H1 (cell line): ENCODE measurements at regions of chr1 and their contacts with region 1.

Region 1: GRCh38 chr1:13813398-13814012 is 113.5 kb downstream of the PRDM2 start:
- DNase-seq: peak in 1 of 2 experiments; percentile 91
- H3K4me3 ChIP-seq: no peak overlapping the region
- H3K27ac ChIP-seq: no peak overlapping the region
- H3K4me1 ChIP-seq: no peaks in the 10 kb centered on the region
- H3K27me3 ChIP-seq: no peaks in the 10 kb centered on the region; a peak in 1 of 7 replicates
- CTCF ChIP-seq: peak; percentile 87 to 93 (median 88)
- EP300 ChIP-seq: no peak
- POLR2A ChIP-seq: no peak
- RAD21 ChIP-seq: peak; percentile 66 to 73

Region 2: DNA sequence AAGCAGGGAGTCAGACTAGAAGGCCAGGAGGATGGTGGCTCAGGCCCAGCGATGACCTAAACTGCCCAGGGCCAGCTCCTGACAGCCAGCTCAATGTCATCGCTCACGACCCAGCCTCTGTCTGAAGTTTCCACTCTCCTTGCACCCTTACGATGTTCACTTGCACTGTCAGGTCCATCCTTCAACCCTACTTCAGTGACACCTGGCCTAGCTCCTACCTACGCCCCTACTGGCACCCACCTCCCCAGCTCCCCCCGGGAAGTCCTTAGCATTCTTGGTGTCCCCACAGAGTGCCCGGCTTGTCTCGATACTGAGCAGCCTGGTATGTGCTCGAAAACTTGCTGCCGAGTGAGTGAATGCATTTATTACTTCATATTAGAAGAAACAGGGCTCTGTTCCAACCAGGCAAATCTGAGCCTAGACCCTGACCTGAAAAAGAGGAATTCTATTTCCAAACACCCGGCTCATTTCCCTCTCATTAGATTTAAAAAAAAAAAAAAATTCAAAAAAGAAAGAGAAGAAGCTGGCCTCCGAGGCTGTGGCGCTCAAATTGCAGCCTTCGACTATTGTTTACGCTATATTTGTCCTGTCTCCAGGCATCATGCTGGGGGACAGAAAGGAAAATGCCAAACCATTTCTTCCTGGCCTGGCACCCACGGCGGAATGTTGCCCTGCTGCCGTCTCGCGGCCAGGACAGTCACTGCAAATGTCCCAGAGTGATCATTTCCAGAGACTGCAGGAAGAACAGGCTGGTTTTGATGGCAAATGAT is 269.9 kb before region 1 on chr1:
- CTCF ChIA-PET with region 1: no interaction called
- POLR2A ChIA-PET with region 1: no interaction called
- DNase-seq: no peak
- H3K4me3 ChIP-seq: no peak overlapping the region
- H3K27ac ChIP-seq: no peak overlapping the region
- H3K4me1 ChIP-seq: no peaks in the 10 kb centered on the region
- H3K27me3 ChIP-seq: no peaks in the 10 kb centered on the region
- CTCF ChIP-seq: peak; percentile 9 to 25 (median 13); a peak in 3 of 4 replicates
- EP300 ChIP-seq: no peak
- POLR2A ChIP-seq: no peak
- RAD21 ChIP-seq: peak in 1 of 2 experiments; percentile 35; a peak in 2 of 4 replicates

Region 3: DNA sequence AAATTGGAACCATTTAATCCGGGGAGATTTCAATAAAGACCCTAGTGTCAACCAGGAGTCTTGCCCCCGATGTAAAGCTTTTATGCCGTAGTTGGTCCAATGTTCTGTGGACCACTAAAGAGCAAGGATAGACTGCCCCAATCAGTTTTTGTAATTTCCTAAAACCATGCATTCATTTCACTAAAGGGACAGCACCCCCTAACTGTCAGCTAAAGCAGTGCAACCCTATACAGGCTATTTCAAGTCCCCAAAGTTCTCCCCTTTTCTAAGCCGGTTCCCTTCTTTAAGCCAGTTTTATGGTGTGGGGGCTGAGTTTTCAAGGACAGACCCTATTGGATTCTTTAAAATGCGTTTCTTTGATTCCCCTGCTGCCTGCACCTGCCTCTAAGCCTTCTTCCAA is 242.6 kb before region 1 on chr1:
- CTCF ChIA-PET with region 1: no interaction called
- POLR2A ChIA-PET with region 1: no interaction called
- DNase-seq: no peak
- H3K4me3 ChIP-seq: no peak overlapping the region
- H3K27ac ChIP-seq: no peak overlapping the region
- H3K4me1 ChIP-seq: no peaks in the 10 kb centered on the region
- H3K27me3 ChIP-seq: no peaks in the 10 kb centered on the region
- CTCF ChIP-seq: peak in 2 of 3 experiments; percentile 47 to 72; a peak in 2 of 4 replicates
- EP300 ChIP-seq: no peak
- POLR2A ChIP-seq: no peak
- RAD21 ChIP-seq: peak; percentile 43 to 58; a peak in 3 of 4 replicates

Region 4: GRCh38 chr1:13662493-13662892 is 151.0 kb before region 1 on chr1:
- CTCF ChIA-PET with region 1: interaction called, 19 read pairs
- POLR2A ChIA-PET with region 1: no interaction called
- DNase-seq: no peak
- H3K4me3 ChIP-seq: no peak overlapping the region
- H3K27ac ChIP-seq: no peak overlapping the region
- H3K4me1 ChIP-seq: no peaks in the 10 kb centered on the region
- H3K27me3 ChIP-seq: no peaks in the 10 kb centered on the region
- CTCF ChIP-seq: no peak
- EP300 ChIP-seq: no peak
- POLR2A ChIP-seq: no peak
- RAD21 ChIP-seq: no peak

Region 5: GRCh38 chr1:13801232-13801631 is 12.3 kb before region 1 on chr1:
- CTCF ChIA-PET with region 1: interaction called, 28 read pairs
- POLR2A ChIA-PET with region 1: no interaction called
- DNase-seq: no peak
- H3K4me3 ChIP-seq: no peak overlapping the region
- H3K27ac ChIP-seq: no peak overlapping the region
- H3K4me1 ChIP-seq: peaks cover 0 to 3% (median 1%) of the 10 kb centered on the region in 4 experiments; a peak in 2 of 7 replicates
- H3K27me3 ChIP-seq: no peaks in the 10 kb centered on the region; a peak in 1 of 7 replicates
- CTCF ChIP-seq: no peak
- EP300 ChIP-seq: no peak
- POLR2A ChIP-seq: no peak
- RAD21 ChIP-seq: no peak

Region 6: GRCh38 chr1:13828454-13829151 is 15.1 kb after region 1 on chr1:
- CTCF ChIA-PET with region 1: interaction called, 30 read pairs
- POLR2A ChIA-PET with region 1: no interaction called
- DNase-seq: peak; percentile 65 to 93
- H3K4me3 ChIP-seq: no peak overlapping the region
- H3K27ac ChIP-seq: no peak overlapping the region
- H3K4me1 ChIP-seq: no peaks in the 10 kb centered on the region; a peak in 1 of 7 replicates
- H3K27me3 ChIP-seq: peaks cover 0 to 2% (median 0%) of the 10 kb centered on the region in 4 experiments; a peak in 2 of 7 replicates
- CTCF ChIP-seq: peak; percentile 79 to 94 (median 91)
- EP300 ChIP-seq: no peak
- POLR2A ChIP-seq: no peak
- RAD21 ChIP-seq: peak; percentile 73 to 81

Region 7: DNA sequence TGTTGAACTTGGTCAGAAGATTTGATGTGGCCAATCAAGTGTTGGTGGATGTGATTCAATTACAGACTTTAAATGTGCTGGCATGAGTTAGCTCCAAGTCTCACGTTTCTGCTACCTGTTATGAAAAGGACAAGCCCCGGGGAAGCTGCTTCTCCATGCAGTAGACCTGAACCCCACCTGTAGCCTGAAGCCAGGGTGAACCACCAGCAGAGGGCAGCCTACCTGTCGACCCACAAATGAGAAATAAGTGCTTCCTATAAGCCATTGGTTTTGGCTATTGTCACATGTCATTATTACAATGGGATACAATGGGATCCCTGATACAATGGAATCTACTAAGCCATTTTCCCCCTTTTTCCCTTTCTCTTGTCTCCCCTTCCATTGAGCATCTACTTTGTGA is 116.6 kb after region 1 on chr1:
- CTCF ChIA-PET with region 1: no interaction called
- POLR2A ChIA-PET with region 1: no interaction called
- DNase-seq: peak; percentile 41 to 79
- H3K4me3 ChIP-seq: no peak overlapping the region
- H3K27ac ChIP-seq: no peak overlapping the region
- H3K4me1 ChIP-seq: no peaks in the 10 kb centered on the region
- H3K27me3 ChIP-seq: no peaks in the 10 kb centered on the region
- CTCF ChIP-seq: peak; percentile 65 to 87 (median 87)
- EP300 ChIP-seq: no peak
- POLR2A ChIP-seq: no peak
- RAD21 ChIP-seq: peak; percentile 39 to 48; a peak in 3 of 4 replicates